ENCODE measurements at regions of chr9 and their contacts with region 1.

Region 1: GRCh38 chr9:26033336-26033735 is 355.1 kb upstream of the TUSC1 start:
- DNase-seq: no peak
- ATAC-seq: no peak
- H3K4me3 ChIP-seq: no peak overlapping the region
- H3K27ac ChIP-seq: no peak overlapping the region
- H3K4me1 ChIP-seq: no peaks in the 10 kb centered on the region
- H3K27me3 ChIP-seq: no peaks in the 10 kb centered on the region
- CTCF ChIP-seq: no peak

Region 2: DNA sequence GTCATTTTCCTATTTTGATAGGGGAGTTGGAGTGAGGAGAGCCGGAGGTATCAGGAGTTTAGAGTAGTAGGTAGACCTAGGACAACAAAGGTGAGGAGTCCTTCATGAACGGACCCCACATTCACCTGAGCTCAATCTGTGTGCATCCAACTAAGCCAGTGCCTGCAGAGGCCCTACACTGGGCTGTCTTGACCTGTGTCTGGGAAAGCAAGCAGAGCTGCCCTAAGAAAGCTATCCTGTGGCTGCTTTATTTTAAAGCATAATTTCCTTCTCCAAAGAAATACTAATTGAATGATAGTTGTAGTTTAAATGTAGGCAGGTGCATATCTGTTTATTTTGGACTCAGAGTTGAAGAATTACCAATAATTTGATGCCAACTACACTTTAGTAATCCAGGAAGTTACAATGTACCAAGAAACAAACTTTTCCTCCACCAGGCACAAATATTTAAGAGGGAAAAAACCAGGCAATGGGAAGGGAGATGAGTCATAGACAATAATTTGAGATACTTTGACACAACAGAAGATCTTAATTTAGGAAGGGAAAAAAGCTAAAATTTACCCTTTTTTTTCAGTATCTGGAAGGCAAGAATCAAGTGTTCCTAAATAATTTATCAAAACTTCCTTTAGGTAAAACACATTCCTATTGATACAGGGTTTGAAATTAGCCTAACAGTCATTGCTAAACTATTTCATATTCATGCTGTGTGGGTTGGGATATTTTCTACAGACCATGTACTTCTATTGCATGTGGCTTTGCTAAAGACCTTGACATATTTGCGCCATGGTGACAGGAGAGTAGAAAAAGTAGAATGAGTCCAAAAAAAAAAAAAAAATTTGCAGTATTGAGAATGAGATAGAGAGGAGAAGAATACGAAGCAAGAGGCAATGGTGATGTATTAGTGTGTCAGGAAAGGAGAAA is 21.5 kb after region 1 on chr9:
- intact Hi-C with region 1: loop called in 1 of 10 experiments (anchors 1 kb)
- DNase-seq: no peak
- ATAC-seq: no peak
- H3K4me3 ChIP-seq: no peak overlapping the region
- H3K27ac ChIP-seq: no peak overlapping the region
- H3K4me1 ChIP-seq: no peaks in the 10 kb centered on the region
- H3K27me3 ChIP-seq: no peaks in the 10 kb centered on the region
- CTCF ChIP-seq: no peak

Measured in heart right ventricle (tissue), 16 donors.